ENCODE measurements at regions of chr4 and their contacts with region 1.

Region 1: GRCh38 chr4:1011022-1011694 is at the start of gene FGFRL1:
- DNase-seq: peak; percentile 87 to 88
- ATAC-seq: peak; percentile 62 to 63
- H3K4me3 ChIP-seq: peak within 1 kb of the TSS; percentile 63 to 97 (median 74)
- H3K27ac ChIP-seq: peak within 1 kb of the TSS; percentile 50 to 64 (median 62)
- H3K4me1 ChIP-seq: peaks cover 7 to 19% of the 10 kb centered on the region in 2 donors
- H3K27me3 ChIP-seq: peaks cover 19 to 23% (median 20%) of the 10 kb centered on the region in 3 donors
- CTCF ChIP-seq: no peak
- POLR2A ChIP-seq: peak in 1 of 2 donors; percentile 10
- total RNA-seq, gene FGFRL1: 10.4 to 32.4 (median 15.2) TPM

Region 2: GRCh38 chr4:519203-519651 is 491.9 kb before region 1 on chr4:
- in situ Hi-C with region 1: no loop called
- intact Hi-C with region 1: no loop called
- DNase-seq: no peak
- ATAC-seq: no peak
- H3K4me3 ChIP-seq: no peak overlapping the region
- H3K27ac ChIP-seq: no peak overlapping the region
- H3K4me1 ChIP-seq: no peaks in the 10 kb centered on the region
- H3K27me3 ChIP-seq: no peaks in the 10 kb centered on the region
- CTCF ChIP-seq: no peak
- POLR2A ChIP-seq: no peak

Region 3: GRCh38 chr4:973431-974397 is 37.4 kb before region 1 on chr4 and contains the start of gene DGKQ:
- in situ Hi-C with region 1: no loop called
- intact Hi-C with region 1: loop called (anchors 2 kb)
- DNase-seq: peak; percentile 79 to 85
- ATAC-seq: peak; percentile 93 to 96
- H3K4me3 ChIP-seq: peak within 1 kb of the TSS; percentile 73 to 82 (median 79)
- H3K27ac ChIP-seq: no peak within 1 kb of the TSS
- H3K4me1 ChIP-seq: peaks cover 15 to 16% of the 10 kb centered on the region in 2 donors
- H3K27me3 ChIP-seq: no peaks in the 10 kb centered on the region
- CTCF ChIP-seq: no peak
- POLR2A ChIP-seq: peak in 1 of 2 donors; percentile 29
- total RNA-seq, gene DGKQ: 3.2 to 5.2 (median 4.5) TPM

Measured in gastrocnemius medialis (tissue), 4 donors.